Calu3 (cell line): ENCODE measurements at regions of chr12 and their contacts with region 1.

Region 1: GRCh38 chr12:110468212-110469048 is at the starts of genes FAM216A and GPN3:
- DNase-seq: peak; percentile 98
- H3K4me3 Mint-ChIP-seq: peak within 1 kb of the TSS; percentile 85
- H3K27ac Mint-ChIP-seq: peak within 1 kb of the TSS; percentile 87
- H3K4me1 Mint-ChIP-seq: peaks cover 14% of the 10 kb centered on the region
- H3K27me3 Mint-ChIP-seq: no peaks in the 10 kb centered on the region
- CTCF ChIP-seq: no peak
- total RNA-seq, gene FAM216A: 10.5 and 11.2 TPM in 2 replicates
- total RNA-seq, gene GPN3: 31.8 and 35.9 TPM in 2 replicates

Region 2: DNA sequence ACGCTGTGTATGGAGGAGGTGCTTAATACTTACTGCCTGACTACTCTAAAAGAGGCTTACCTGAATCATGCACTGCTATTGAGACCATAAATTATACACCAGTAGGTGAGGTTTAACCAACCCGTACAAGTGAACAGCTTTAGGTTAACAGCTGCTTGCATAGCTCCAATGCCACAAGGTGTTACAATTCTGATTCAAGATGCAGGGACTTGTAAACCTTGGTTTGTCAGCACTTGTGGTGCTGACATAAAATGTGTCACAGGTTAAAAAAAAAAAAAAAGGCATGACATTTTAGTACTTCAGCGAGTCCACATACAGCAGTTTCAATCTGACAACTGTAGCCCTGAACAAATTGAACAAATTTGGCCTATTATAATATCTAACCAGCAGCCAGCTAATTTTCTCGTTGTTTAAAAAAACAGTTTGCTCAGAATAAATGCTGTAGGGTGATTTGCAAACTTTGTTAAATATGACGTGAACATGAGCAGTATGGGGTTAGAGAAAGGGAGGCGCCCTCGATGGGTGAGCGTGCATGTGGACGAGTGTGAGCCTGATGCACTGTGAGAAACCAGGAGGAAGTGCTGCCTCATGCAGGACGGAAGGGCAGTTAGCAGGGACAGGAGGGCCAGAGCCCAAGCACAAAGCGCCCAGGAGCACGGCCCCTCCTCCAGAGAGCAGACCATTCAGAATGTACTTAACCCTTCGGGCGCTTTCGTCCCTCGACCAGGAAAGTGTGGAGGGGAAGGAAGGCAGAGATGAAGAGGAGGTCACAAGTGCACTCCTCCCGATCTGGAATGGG is 523.7 kb before region 1 on chr12:
- CTCF ChIA-PET with region 1: no interaction called
- intact Hi-C with region 1: no loop called
- DNase-seq: no peak
- H3K4me3 Mint-ChIP-seq: no peak overlapping the region
- H3K27ac Mint-ChIP-seq: no peak overlapping the region
- H3K4me1 Mint-ChIP-seq: no peaks in the 10 kb centered on the region
- H3K27me3 Mint-ChIP-seq: no peaks in the 10 kb centered on the region
- CTCF ChIP-seq: no peak

Region 3: GRCh38 chr12:110079477-110080400 is 388.7 kb before region 1 on chr12:
- CTCF ChIA-PET with region 1: no interaction called
- intact Hi-C with region 1: no loop called
- DNase-seq: peak; percentile 29
- H3K4me3 Mint-ChIP-seq: peak overlapping the region; percentile 6
- H3K27ac Mint-ChIP-seq: peak overlapping the region; percentile 17
- H3K4me1 Mint-ChIP-seq: peaks cover 8% of the 10 kb centered on the region
- H3K27me3 Mint-ChIP-seq: peaks cover 56% of the 10 kb centered on the region
- CTCF ChIP-seq: no peak

Region 4: DNA sequence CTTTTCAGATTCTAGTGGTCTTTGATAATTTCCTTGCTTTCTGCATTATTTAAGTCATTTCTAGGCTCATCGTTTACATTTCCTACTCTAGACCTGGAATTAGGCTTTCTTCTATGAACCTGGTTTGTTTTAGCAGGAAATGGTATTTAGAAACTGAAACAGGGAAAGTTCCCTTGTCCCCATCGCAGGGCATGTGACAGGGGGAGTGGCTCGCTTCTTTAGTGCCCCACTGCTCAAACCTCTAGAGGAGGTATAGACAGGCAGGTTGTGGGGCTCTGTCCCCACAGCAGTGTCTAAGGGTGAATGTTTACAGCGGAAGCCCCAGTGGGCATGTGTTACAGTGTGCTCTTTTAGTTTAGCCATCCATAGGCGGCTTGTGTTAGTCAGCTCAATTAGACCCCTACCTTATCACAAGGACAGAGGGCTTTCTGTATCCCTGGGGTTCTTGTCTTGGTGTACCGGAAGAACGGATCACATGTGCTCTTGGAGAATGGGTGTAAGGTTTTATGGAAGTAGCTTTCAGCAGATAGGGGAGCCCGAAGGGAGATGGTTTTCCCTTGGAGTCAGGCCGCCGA is 319.3 kb before region 1 on chr12:
- CTCF ChIA-PET with region 1: no interaction called
- intact Hi-C with region 1: no loop called
- DNase-seq: no peak
- H3K4me3 Mint-ChIP-seq: no peak overlapping the region
- H3K27ac Mint-ChIP-seq: no peak overlapping the region
- H3K4me1 Mint-ChIP-seq: no peaks in the 10 kb centered on the region
- H3K27me3 Mint-ChIP-seq: no peaks in the 10 kb centered on the region
- CTCF ChIP-seq: no peak

Region 5: DNA sequence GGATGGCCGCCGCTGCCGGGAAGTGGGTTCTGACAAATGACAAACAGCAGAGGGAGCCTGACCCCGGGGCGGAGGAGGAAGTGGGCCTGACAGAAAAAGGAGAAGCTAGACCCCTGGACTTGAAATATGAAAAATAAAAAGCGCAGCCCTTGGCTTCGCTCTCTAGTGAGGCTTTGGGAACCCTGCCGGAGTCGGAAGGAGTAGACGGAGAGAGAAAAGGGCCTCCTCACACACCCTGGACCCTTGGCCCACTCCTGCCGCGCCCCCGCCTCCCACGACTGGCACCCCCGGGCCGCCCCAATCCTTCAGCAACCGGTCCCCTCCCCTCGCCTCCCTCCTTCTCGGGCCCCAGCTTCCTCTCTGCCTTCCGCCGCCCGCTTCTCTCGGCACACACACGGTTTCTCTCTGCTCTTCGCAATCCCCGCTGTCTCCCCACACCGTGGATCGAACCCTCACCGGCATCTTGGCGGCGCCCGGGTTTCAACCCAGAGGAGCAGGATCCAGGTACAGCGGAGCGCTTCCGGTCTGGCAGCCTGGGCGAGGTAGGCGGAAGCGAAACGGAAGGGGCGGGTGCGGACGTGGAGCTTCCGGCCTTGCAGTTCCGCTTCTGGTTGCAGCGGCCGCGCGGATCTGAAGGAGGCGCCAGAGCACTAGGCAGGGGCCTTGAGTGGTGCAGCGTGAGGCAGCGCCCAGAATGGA is 18.5 kb before region 1 on chr12 and contains the start of gene ARPC3:
- CTCF ChIA-PET with region 1: interaction called, 21 read pairs
- intact Hi-C with region 1: no loop called
- DNase-seq: peak; percentile 96
- H3K4me3 Mint-ChIP-seq: peak within 1 kb of the TSS; percentile 92
- H3K27ac Mint-ChIP-seq: peak within 1 kb of the TSS; percentile 96
- H3K4me1 Mint-ChIP-seq: peaks cover 8% of the 10 kb centered on the region
- H3K27me3 Mint-ChIP-seq: no peaks in the 10 kb centered on the region
- CTCF ChIP-seq: peak; percentile 79
- total RNA-seq, gene ARPC3: 321 and 344 TPM in 2 replicates

Region 6: DNA sequence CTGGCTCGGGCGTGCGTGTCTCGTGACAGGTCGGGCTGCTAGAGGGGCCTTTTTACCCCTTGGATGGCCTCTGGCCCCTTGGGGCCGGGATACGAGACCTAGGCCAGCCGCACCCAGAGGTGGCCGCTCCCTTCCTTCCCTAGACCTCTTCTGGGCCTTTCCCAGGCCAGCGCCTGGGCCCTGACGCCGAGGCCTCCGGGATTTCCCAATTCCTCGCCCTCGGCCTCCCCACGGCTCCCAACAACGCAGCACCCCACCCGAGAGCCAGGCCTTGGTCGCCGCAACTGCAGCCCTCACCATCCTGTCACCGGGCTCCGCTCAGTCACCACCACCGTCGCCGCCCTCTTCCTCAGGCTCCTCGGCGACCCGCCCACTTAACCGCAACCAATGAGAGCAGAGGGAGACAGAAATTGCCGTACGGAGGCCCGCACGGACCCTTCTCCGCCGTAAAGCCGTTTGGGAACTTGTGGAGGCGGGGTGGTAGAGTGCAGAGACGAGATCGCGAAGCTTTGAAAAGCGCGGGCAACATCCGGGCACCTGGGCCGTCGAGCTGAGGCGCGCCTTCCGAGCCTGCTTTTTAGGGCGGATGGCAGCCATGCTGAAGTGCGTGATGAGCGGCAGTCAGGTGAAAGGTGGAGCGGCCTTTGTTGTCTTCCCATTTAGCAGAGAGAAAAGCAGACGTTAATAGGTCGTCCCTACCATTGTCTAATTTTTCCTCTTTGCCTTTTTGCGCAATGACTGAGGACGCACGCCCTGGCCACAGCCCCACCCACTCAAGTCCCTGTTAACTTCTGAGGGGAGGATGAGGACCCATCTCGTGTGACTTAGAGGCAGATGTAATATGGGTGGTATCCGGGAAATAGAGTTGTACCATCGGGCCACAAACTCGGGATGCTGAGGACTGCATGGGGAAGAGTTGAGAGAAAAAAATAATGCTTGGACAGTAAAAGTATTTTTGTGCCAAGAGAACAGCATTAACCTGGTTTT is 33.6 kb after region 1 on chr12 and contains the starts of genes RAD9B and VPS29:
- CTCF ChIA-PET with region 1: interaction called, 12 read pairs
- intact Hi-C with region 1: no loop called
- DNase-seq: peak; percentile 99
- H3K4me3 Mint-ChIP-seq: peak within 1 kb of the TSS; percentile 95
- H3K27ac Mint-ChIP-seq: peak within 1 kb of the TSS; percentile 77
- H3K4me1 Mint-ChIP-seq: peaks cover 15% of the 10 kb centered on the region
- H3K27me3 Mint-ChIP-seq: no peaks in the 10 kb centered on the region
- CTCF ChIP-seq: no peak
- total RNA-seq, gene RAD9B: 0.80 and 1.9 TPM in 2 replicates
- total RNA-seq, gene VPS29: 156 and 164 TPM in 2 replicates